ENCODE measurements at regions of chr1 and their contacts with region 1.

Region 1: DNA sequence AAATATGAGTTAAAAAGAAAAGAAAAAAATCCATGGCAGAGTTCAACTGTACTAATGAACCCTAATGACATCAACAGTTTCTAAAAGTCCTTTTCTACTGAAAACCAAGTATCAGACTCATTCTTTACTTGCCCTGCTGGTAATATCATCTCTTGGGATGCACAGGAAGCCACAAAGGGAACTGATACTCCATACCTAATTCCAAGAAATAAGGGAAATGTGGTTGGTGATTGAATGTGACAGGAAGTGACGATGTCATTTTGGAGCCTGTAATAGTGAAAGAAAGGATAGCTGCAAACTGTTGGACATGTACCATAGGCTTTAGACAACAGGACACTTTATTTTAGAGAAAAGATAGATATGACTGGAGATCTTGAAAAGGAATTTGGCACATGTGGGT is 98.7 kb upstream of the VAV3 start:
- DNase-seq: no peak
- ATAC-seq: no peak
- H3K4me3 Mint-ChIP-seq: no peak overlapping the region
- H3K27ac Mint-ChIP-seq: no peak overlapping the region
- H3K4me1 Mint-ChIP-seq: peaks cover 9% of the 10 kb centered on the region
- H3K27me3 Mint-ChIP-seq: no peaks in the 10 kb centered on the region
- CTCF ChIP-seq: no peak

Region 2: DNA sequence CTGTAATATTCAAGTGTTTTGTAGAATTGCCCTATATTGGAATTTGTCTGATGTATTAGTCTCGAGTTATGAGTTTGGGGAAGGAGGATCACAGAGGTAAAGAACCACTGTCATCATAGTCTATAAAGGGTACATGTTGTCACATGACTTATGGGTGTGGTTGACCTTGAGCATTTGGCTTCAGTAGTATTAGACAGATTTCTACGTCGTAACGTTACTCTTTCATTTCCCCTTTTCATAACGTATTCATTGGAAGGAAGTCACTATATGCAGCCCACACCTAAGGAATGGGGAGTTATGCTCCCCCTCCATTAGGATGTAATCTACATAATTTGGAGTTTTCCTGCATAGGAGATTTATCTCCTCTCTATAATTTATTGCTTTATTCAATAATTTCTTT is 11.4 kb after region 1 on chr1:
- CTCF ChIA-PET with region 1: no interaction called
- POLR2A ChIA-PET with region 1: no interaction called
- intact Hi-C with region 1: loop called (anchors 2 kb)
- DNase-seq: no peak
- ATAC-seq: peak; percentile 87
- H3K4me3 Mint-ChIP-seq: no peak overlapping the region
- H3K27ac Mint-ChIP-seq: peak overlapping the region; percentile 37
- H3K4me1 Mint-ChIP-seq: peaks cover 61% of the 10 kb centered on the region
- H3K27me3 Mint-ChIP-seq: no peaks in the 10 kb centered on the region
- CTCF ChIP-seq: no peak

Region 3: DNA sequence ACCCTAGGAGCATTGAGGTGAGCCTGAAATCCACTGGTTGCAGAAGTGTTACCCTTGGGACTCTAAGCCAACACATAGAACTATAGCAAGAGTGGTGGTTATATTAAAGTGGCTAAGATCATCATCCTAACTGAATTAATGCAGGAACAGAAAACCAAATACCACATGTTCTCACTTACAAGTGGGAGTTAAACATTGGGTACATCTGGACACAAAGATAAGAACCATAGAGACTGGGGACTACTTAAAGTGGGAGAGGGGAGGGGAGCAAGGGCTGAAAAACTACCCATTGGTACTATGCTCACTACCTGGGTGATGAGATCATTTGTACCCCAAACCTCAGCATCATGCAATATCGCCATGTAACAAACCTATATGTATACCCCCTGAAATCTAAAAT is 36.4 kb after region 1 on chr1:
- CTCF ChIA-PET with region 1: no interaction called
- POLR2A ChIA-PET with region 1: no interaction called
- intact Hi-C with region 1: loop called (anchors 5 kb)
- DNase-seq: no peak
- ATAC-seq: no peak
- H3K4me3 Mint-ChIP-seq: no peak overlapping the region
- H3K27ac Mint-ChIP-seq: no peak overlapping the region
- H3K4me1 Mint-ChIP-seq: peaks cover 4% of the 10 kb centered on the region
- H3K27me3 Mint-ChIP-seq: no peaks in the 10 kb centered on the region
- CTCF ChIP-seq: no peak

Measured in activated B cell treated with CpG ODN at 0.5 μM for 24 hours (primary cell).